ENCODE measurements at regions of chr5 and their contacts with region 1.

Region 1: GRCh38 chr5:174636086-174636485 is 88.3 kb upstream of the MSX2 start:
- DNase-seq: no peak
- ATAC-seq: no peak
- H3K4me3 ChIP-seq: no peak overlapping the region
- H3K27ac ChIP-seq: no peak overlapping the region
- H3K4me1 ChIP-seq: no peaks in the 10 kb centered on the region
- H3K27me3 ChIP-seq: no peaks in the 10 kb centered on the region
- CTCF ChIP-seq: no peak
- POLR2A ChIP-seq: no peak

Region 2: DNA sequence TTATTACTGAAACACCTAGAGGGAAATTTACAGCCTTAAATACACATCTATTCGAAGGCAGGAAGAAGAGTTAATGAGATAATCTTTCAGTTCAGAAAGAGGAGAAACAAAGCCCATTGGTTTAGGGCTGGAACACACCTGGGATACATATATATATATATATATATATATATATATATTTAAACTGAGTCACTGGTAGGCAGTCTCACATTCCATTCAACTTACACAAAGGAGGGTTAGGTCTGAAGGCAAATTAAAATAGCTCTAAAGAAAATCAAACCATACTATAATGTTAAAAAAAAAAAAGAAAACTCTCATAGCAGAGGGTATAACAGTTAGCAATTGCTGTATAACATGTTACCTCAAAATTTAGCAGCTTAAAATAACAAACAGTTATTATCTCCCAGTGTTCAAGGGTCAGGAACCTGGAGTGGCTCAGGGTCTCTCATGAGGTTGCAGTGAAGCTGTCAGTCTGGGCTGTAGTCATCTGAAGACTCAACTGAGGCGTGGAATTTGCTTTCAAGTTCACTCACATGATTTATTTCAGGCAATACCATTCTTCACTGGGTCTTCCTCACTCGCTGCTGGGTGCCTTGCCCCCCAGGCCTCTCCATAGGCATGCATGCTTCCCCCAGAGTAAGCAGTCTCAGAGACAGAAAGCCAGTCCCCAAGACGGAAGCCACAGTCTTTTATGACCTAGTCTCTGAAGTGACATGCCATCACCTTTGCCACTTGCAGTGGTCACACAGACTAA is 257.8 kb before region 1 on chr5:
- intact Hi-C with region 1: loop called in 1 of 10 experiments (anchors 5 kb)
- DNase-seq: no peak
- ATAC-seq: no peak
- H3K4me3 ChIP-seq: no peak overlapping the region
- H3K27ac ChIP-seq: no peak overlapping the region
- H3K4me1 ChIP-seq: no peaks in the 10 kb centered on the region
- H3K27me3 ChIP-seq: peaks cover 0 to 1% (median 0%) of the 10 kb centered on the region in 9 donors
- CTCF ChIP-seq: no peak
- POLR2A ChIP-seq: no peak